HepG2 (cell line): ENCODE measurements at regions of chr2 and their contacts with region 1.

Region 1: GRCh38 chr2:27152786-27153510 is 4.1 kb downstream of the TCF23 start:
- DNase-seq: no peak
- ATAC-seq: no peak
- H3K4me3 ChIP-seq: no peak overlapping the region
- H3K27ac ChIP-seq: no peak overlapping the region
- H3K4me1 ChIP-seq: peaks cover 69% of the 10 kb centered on the region
- H3K27me3 ChIP-seq: peaks cover 0 to 2% of the 10 kb centered on the region in 2 experiments; a peak in 2 of 5 replicates
- CTCF ChIP-seq: no peak
- EP300 ChIP-seq: no peak
- POLR2A ChIP-seq: no peak
- RAD21 ChIP-seq: no peak

Region 2: GRCh38 chr2:27174316-27175040 is 21.5 kb after region 1 on chr2:
- CTCF ChIA-PET with region 1: no interaction called
- POLR2A ChIA-PET with region 1: interaction called, 4 read pairs
- in situ Hi-C with region 1: no loop called
- intact Hi-C with region 1: loop called (anchors 2 kb)
- DNase-seq: no peak
- ATAC-seq: no peak
- H3K4me3 ChIP-seq: no peak overlapping the region
- H3K27ac ChIP-seq: peak overlapping the region; percentile 43
- H3K4me1 ChIP-seq: peaks cover 98% of the 10 kb centered on the region
- H3K27me3 ChIP-seq: no peaks in the 10 kb centered on the region
- CTCF ChIP-seq: no peak
- EP300 ChIP-seq: no peak
- POLR2A ChIP-seq: no peak
- RAD21 ChIP-seq: no peak

Region 3: DNA sequence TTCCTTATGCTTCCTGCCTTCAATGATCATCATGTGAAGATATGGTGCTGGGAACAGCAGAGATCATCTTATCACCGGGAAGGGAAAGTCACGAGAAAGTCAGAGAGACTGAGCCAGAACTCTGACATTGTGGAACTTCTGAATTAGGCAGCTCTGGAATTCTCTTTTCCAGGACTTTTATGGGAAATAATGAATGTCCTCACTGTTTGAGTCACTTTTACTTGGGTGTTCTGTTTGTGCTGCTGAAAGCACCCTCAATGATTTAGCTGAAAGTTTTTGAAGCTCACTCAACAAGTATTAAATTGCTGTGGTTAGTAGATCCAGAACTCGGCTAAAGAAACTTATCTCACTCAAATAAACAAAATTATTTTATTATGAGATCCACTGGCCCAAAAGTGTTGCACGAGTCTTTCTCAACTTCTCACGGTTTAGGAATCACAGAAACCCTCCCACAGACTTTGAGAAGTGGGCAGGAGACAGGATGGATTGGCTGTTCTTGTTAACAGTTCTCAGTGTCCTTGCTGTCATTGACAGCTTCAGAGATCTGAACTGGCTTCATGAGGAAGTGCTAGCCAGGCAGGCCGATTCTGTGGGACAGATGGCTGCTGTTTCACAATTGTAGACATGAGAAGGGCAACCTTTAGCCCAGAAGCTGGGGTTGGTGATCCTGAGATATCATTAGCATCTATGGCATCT is 32.5 kb after region 1 on chr2:
- CTCF ChIA-PET with region 1: no interaction called
- POLR2A ChIA-PET with region 1: interaction called, 9 read pairs
- in situ Hi-C with region 1: loop called (anchors 5 kb)
- intact Hi-C with region 1: no loop called
- DNase-seq: peak; percentile 86
- ATAC-seq: peak; percentile 89
- H3K4me3 ChIP-seq: no peak overlapping the region
- H3K27ac ChIP-seq: peak overlapping the region; percentile 63
- H3K4me1 ChIP-seq: peaks cover 66% of the 10 kb centered on the region
- H3K27me3 ChIP-seq: no peaks in the 10 kb centered on the region
- CTCF ChIP-seq: no peak
- EP300 ChIP-seq: peak in 1 of 2 experiments; percentile 38; a peak in 1 of 4 replicates
- POLR2A ChIP-seq: no peak; a peak in 1 of 4 replicates
- RAD21 ChIP-seq: no peak; the same call in 1 of the 2 replicates

Region 4: DNA sequence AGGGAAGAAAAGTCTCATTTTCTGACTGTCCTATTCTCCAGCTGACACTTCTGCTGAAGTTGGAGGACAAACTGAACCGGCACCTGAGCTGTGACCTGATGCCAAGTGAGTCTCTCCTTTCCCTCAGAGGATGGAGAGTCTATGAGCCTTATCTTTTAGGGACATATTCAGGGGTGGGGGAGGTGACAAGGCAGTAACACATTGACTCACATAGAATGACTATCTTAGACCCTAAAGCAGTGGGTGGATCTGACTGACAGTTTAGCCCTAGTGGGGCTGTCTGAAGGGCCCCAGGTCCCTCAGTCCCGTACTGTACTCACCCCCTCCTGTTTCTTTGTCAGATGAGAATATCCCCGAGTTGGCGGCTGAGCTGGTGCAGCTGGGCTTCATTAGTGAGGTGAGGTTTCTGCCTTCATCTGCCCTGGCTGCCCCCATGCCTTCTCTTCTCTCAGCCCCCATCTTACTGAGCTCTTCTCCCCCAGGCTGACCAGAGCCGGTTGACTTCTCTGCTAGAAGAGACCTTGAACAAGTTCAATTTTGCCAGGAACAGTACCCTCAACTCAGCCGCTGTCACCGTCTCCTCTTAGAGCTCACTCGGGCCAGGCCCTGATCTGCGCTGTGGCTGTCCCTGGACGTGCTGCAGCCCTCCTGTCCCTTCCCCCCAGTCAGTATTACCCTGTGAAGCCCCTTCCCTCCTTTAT is 288.4 kb after region 1 on chr2:
- CTCF ChIA-PET with region 1: no interaction called
- POLR2A ChIA-PET with region 1: no interaction called
- in situ Hi-C with region 1: no loop called
- intact Hi-C with region 1: no loop called
- DNase-seq: no peak
- ATAC-seq: peak; percentile 9
- H3K4me3 ChIP-seq: no peak overlapping the region
- H3K27ac ChIP-seq: no peak overlapping the region
- H3K4me1 ChIP-seq: no peaks in the 10 kb centered on the region
- H3K27me3 ChIP-seq: no peaks in the 10 kb centered on the region
- CTCF ChIP-seq: no peak
- EP300 ChIP-seq: no peak
- POLR2A ChIP-seq: no peak
- RAD21 ChIP-seq: no peak